Activated B cell treated with CpG ODN at 0.5 μM for 24 hours (primary cell): ENCODE measurements at regions of chr11 and their contacts with region 1.

Region 1: GRCh38 chr11:67382276-67383136 is 9.1 kb upstream of the CLCF1 start:
- DNase-seq: peak; percentile 75
- ATAC-seq: peak; percentile 80
- H3K4me3 Mint-ChIP-seq: peak overlapping the region; percentile 70
- H3K27ac Mint-ChIP-seq: peak overlapping the region; percentile 90
- H3K4me1 Mint-ChIP-seq: peaks cover 31% of the 10 kb centered on the region
- H3K27me3 Mint-ChIP-seq: no peaks in the 10 kb centered on the region
- CTCF ChIP-seq: peak; percentile 47

Region 2: DNA sequence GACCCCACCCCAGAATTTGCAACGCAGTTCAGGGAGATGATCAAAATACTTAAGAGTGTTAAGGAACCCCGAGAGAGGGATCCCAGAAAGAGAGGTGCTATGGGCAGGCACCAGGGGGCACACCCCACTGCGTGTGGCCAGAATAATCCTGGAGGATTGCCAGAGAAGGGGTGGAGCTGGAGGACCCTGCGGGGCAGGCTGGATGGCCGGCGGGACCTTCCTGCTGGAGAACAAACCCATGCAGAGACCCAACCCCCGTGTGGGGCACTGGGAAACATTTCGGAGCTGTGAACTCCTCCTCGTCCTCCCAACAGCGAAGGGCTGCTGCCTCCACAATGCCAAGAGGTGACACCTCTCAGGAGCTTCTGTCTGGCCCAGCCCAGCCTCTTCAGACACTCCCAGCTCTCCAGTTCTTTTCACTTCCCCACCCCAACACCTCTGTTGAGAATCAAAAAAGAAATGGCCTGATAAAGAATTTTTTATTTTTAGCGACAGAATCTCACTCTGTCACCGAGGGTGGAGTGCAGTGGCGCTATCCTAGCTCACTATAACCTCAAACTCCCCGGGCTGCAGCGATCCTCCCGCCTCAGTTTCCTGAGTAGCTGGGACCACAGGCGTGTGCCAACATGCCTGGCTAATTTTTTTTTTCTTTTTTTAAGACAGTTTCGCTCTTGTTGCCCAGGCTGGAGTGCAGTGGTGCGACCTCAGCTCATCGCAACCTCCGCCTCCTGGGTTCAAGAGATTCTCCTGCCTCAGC is 300.3 kb before region 1 on chr11:
- CTCF ChIA-PET with region 1: interaction called, 19 read pairs
- POLR2A ChIA-PET with region 1: no interaction called
- intact Hi-C with region 1: loop called (anchors 1 kb)
- DNase-seq: no peak
- ATAC-seq: no peak
- H3K4me3 Mint-ChIP-seq: peak overlapping the region; percentile 41
- H3K27ac Mint-ChIP-seq: no peak overlapping the region
- H3K4me1 Mint-ChIP-seq: peaks cover 14% of the 10 kb centered on the region
- H3K27me3 Mint-ChIP-seq: peaks cover 10% of the 10 kb centered on the region
- CTCF ChIP-seq: no peak

Region 3: GRCh38 chr11:67252831-67253239 is 129.7 kb before region 1 on chr11:
- CTCF ChIA-PET with region 1: interaction called, 10 read pairs
- POLR2A ChIA-PET with region 1: interaction called, 5 read pairs
- intact Hi-C with region 1: no loop called
- DNase-seq: no peak
- ATAC-seq: peak; percentile 75
- H3K4me3 Mint-ChIP-seq: no peak overlapping the region
- H3K27ac Mint-ChIP-seq: no peak overlapping the region
- H3K4me1 Mint-ChIP-seq: peaks cover 8% of the 10 kb centered on the region
- H3K27me3 Mint-ChIP-seq: no peaks in the 10 kb centered on the region
- CTCF ChIP-seq: no peak

Region 4: DNA sequence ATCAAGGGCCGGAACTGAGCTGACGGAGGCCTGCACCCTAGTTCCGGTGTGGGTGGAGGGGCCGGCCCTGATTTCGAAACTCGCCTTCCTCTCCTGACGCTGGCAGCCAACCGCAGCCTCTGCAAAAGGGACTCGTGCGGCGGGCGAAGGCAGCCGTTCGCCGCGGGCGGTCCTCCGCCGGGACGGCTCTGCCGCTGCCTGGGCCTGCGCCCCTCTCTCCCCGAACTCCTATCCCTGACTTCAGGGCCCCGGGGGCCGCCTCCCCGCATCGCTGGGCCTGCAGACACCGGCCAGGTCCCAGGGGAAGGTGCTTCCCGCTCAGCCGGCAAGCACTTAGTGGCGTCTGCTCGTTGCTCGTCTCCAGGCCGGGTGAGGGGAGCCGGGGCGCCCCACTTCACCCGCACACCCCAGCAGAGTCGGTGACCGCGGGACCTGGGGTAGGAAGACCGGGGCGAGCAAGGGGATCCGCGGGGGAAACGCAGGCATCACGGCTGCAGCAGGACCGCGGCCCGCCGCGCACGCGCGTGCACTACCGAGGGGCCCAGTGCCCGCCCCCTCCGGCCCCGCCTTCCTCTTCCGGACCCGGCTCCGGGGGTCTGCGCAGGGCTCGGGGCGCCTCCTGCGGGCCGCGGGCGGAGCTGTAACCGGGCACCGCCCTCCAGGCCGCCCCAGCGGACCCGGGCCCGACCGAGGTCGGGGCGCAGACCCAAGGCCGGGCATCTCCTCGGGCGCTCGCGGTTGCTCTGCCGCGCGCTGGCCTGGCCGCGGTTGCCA is 93.9 kb before region 1 on chr11:
- CTCF ChIA-PET with region 1: interaction called, 7 read pairs
- POLR2A ChIA-PET with region 1: interaction called, 21 read pairs
- intact Hi-C with region 1: no loop called
- DNase-seq: peak; percentile 96
- ATAC-seq: peak; percentile 76
- H3K4me3 Mint-ChIP-seq: peak overlapping the region; percentile 80
- H3K27ac Mint-ChIP-seq: peak overlapping the region; percentile 98
- H3K4me1 Mint-ChIP-seq: peaks cover 46% of the 10 kb centered on the region
- H3K27me3 Mint-ChIP-seq: no peaks in the 10 kb centered on the region
- CTCF ChIP-seq: no peak

Region 5: GRCh38 chr11:67317205-67317887 is 65.2 kb before region 1 on chr11:
- CTCF ChIA-PET with region 1: interaction called, 48 read pairs
- POLR2A ChIA-PET with region 1: interaction called, 10 read pairs
- intact Hi-C with region 1: loop called (anchors 1 kb)
- DNase-seq: peak; percentile 96
- ATAC-seq: peak; percentile 82
- H3K4me3 Mint-ChIP-seq: peak overlapping the region; percentile 98
- H3K27ac Mint-ChIP-seq: peak overlapping the region; percentile 98
- H3K4me1 Mint-ChIP-seq: peaks cover 23% of the 10 kb centered on the region
- H3K27me3 Mint-ChIP-seq: no peaks in the 10 kb centered on the region
- CTCF ChIP-seq: no peak

Region 6: DNA sequence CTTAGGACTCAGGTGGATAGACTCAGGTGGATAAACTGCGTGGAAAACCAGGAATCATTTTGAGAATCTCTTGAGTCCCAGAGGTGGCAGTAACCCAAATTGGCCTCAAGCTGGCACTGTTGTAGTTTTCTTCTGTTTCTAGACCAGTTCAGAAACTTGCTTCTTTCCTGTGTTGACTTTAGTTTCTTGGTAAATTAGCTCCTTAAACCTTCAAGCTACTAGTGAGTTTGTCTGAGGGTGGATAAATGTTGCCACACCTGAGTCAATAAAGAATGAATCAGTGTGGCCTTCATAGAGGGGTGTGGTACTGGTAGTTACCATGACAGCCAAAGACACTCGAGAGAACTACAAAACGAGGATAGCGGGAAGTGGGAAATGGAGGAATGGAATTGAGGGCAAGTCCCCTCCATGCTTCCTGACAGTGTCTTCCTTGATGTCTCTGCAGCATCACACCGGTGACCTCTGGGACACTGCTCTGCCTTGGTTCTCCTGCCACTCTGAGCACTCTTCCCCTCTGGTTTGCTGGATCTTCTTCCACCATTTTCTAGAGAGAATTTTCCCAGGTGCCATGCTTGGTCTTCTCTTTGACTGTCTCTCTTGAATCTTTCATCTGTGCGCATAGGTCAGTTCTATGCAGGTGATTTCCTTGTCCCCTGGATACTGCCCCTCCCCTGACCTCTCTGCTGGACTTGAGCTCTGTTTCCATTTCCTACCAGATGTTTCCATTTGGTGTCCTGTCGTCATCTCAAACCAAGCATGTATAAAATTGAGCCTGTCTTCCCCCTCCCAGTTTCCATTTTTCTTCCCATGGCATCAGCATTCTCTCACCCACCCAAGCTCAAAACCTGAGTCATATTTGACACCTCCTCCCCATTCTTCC is 36.3 kb before region 1 on chr11:
- CTCF ChIA-PET with region 1: interaction called, 735 read pairs
- POLR2A ChIA-PET with region 1: interaction called, 1,307 read pairs
- intact Hi-C with region 1: loop called (anchors 1 kb)
- DNase-seq: no peak
- ATAC-seq: peak; percentile 46
- H3K4me3 Mint-ChIP-seq: no peak overlapping the region
- H3K27ac Mint-ChIP-seq: peak overlapping the region; percentile 88
- H3K4me1 Mint-ChIP-seq: peaks cover 71% of the 10 kb centered on the region
- H3K27me3 Mint-ChIP-seq: no peaks in the 10 kb centered on the region
- CTCF ChIP-seq: no peak

Region 7: DNA sequence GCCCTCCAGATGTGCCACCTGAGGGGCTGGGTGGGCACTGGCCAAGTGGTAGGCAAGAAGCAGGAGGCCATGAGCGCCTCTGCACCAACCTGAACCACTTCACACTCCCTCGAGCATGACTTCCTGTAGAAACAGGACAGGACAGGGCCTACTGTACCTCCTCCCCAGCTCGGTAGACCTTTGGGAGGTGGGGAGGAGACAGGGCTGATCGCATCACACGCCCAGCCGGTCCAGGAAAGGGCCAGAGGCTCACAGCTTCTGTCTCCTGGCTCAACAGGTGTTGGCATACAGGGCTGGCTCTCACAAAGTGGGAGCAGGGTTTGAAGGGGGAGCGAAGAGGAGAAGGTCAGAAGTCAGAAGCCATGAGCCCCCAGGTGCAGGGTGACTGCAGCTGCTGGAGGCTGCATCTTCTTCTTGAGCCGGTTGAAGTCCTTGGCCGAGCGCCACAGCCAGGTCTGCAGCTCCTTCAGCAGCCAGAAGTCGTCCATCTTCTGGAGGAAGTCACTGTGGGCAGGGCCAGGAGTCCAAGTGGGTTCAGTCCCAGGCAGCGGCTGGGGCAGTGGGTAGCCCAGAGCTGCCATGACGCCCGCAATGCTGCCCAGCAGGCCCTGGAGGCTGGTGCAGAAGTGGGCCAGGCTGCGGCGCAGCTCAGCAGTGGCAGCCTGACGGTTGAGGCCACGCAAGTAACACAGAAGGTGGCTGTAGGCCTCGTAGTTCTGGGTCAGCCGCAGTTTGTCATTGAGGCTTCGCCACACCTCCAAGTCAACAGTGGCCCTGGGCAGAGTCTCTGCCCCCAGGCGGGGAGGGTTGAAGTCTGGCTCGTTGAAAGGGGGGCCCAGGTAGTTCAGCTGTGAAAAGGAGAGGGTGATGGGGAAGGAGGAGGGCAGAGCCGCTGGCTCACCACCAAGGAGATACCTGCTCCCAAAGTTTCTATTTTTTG is 17.5 kb before region 1 on chr11:
- CTCF ChIA-PET with region 1: interaction called, 73 read pairs
- POLR2A ChIA-PET with region 1: interaction called, 1,307 read pairs
- intact Hi-C with region 1: no loop called
- DNase-seq: no peak
- ATAC-seq: peak; percentile 42
- H3K4me3 Mint-ChIP-seq: peak overlapping the region; percentile 52
- H3K27ac Mint-ChIP-seq: peak overlapping the region; percentile 88
- H3K4me1 Mint-ChIP-seq: peaks cover 81% of the 10 kb centered on the region
- H3K27me3 Mint-ChIP-seq: no peaks in the 10 kb centered on the region
- CTCF ChIP-seq: no peak